Activated CD8-positive, alpha-beta T cell treated with anti-CD3 and anti-CD28 coated beads for 36 hours (primary cell): ENCODE measurements at regions of chr15 and their contacts with region 1.

Region 1: GRCh38 chr15:63466378-63467192 is 37.8 kb upstream of the USP3 start:
- DNase-seq: peak; percentile 68
- ATAC-seq: peak; percentile 85
- H3K4me3 Mint-ChIP-seq: no peak overlapping the region
- H3K27ac Mint-ChIP-seq: no peak overlapping the region
- H3K4me1 Mint-ChIP-seq: peaks cover 26% of the 10 kb centered on the region
- H3K27me3 Mint-ChIP-seq: no peaks in the 10 kb centered on the region
- CTCF ChIP-seq: peak; percentile 86

Region 2: GRCh38 chr15:63447017-63447676 is 19.4 kb before region 1 on chr15:
- CTCF ChIA-PET with region 1: interaction called, 13 read pairs
- POLR2A ChIA-PET with region 1: interaction called, 3 read pairs
- intact Hi-C with region 1: no loop called
- DNase-seq: no peak
- ATAC-seq: no peak
- H3K4me3 Mint-ChIP-seq: no peak overlapping the region
- H3K27ac Mint-ChIP-seq: no peak overlapping the region
- H3K4me1 Mint-ChIP-seq: peaks cover 21% of the 10 kb centered on the region
- H3K27me3 Mint-ChIP-seq: no peaks in the 10 kb centered on the region
- CTCF ChIP-seq: no peak

Region 3: DNA sequence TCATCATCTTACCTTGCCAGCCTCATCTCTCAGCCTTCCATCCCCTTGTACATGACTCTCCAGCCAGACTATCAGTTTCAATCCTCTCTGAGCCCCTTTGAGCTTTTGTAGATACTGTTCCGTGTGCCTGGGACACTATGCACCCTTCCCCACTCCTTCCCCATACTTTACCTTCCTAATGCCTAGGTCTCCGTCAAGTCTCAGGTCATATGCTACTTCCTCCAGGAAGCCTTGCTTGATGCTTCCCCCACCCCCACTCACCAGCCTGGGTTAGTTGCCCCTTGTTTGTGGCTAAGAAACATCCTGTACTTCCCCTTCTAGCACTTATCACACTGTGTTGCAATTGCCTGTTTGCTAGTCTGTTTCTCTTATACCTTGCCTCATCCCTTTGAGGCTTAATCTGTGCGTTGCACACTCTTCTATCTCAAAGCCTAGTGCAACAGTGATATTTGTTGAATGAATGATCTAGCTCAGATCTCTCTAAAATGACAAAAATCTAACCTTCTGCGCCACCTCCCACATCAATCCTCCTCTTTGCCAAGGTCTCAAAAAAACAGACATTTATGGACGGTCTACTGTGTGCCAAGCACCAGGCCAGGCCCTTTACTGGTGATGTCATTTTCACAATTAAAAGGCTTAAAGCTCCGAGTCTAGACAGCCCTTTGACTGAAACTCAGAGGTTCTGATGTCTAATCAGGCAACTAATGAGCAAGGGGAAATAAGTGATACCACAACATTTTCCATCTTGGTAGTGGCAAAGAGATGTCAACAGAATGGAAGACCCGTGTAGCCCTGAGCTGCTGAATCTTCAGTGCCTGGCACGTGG is 31.3 kb after region 1 on chr15:
- CTCF ChIA-PET with region 1: interaction called, 18 read pairs
- POLR2A ChIA-PET with region 1: interaction called, 17 read pairs
- intact Hi-C with region 1: loop called (anchors 5 kb)
- DNase-seq: peak; percentile 82
- ATAC-seq: peak; percentile 60
- H3K4me3 Mint-ChIP-seq: no peak overlapping the region
- H3K27ac Mint-ChIP-seq: no peak overlapping the region
- H3K4me1 Mint-ChIP-seq: peaks cover 75% of the 10 kb centered on the region
- H3K27me3 Mint-ChIP-seq: no peaks in the 10 kb centered on the region
- CTCF ChIP-seq: no peak

Region 4: GRCh38 chr15:63522225-63522578 is 55.6 kb after region 1 on chr15:
- CTCF ChIA-PET with region 1: interaction called, 12 read pairs
- POLR2A ChIA-PET with region 1: no interaction called
- intact Hi-C with region 1: no loop called
- DNase-seq: no peak
- ATAC-seq: no peak
- H3K4me3 Mint-ChIP-seq: no peak overlapping the region
- H3K27ac Mint-ChIP-seq: no peak overlapping the region
- H3K4me1 Mint-ChIP-seq: peaks cover 88% of the 10 kb centered on the region
- H3K27me3 Mint-ChIP-seq: no peaks in the 10 kb centered on the region
- CTCF ChIP-seq: no peak

Region 5: DNA sequence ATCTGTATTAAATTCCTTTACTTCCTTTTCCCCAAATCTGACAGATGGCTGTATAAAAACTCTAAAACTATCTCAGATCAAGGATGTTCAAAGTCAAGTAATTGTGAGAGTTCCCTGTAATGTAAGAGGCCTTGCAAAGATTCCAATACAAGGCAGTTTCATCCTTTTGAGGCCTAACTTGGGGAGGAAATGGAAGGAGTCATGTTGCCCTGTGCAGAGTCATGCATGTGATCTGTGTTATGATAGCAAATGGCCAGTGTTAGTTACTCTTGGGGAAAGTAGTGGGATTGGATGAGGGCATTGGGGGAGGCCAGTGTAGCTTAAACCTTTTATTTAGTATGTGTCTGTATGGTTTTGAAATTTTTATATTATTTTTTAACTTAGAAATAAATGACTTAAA is 106.9 kb after region 1 on chr15:
- CTCF ChIA-PET with region 1: interaction called, 10 read pairs
- POLR2A ChIA-PET with region 1: no interaction called
- intact Hi-C with region 1: no loop called
- DNase-seq: no peak
- ATAC-seq: no peak
- H3K4me3 Mint-ChIP-seq: no peak overlapping the region
- H3K27ac Mint-ChIP-seq: peak overlapping the region; percentile 60
- H3K4me1 Mint-ChIP-seq: peaks cover 7% of the 10 kb centered on the region
- H3K27me3 Mint-ChIP-seq: no peaks in the 10 kb centered on the region
- CTCF ChIP-seq: no peak

Region 6: DNA sequence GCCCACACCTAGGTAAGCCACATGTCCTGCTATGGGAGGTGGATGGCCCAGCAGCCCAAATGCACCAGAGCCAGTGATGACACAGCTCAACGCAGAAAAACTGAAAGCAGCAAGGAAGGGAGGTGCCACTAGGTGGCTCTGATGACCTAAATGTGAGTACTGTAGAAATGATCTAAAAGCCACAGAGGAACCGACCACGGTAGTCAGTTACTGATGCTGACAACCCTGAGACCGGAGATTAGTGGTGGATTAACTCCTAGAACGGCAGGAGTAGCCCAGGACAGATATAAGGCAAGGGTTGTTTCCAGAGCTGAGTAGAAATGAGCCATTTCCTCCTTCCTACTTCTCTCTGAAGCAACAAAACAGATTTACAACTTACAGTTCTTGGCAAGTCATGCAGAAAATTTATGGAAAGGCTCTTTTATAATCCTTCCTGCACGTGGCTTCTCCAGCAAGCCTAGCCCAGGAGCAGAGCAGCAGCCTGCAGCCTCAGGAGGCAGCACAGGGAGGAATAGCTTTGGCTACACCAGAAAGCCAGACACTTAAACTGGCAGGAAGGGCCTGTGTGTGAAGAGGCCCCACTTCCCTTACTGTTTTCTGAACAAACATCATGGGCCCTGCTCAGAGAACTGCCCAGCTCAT is 143.7 kb after region 1 on chr15:
- CTCF ChIA-PET with region 1: interaction called, 13 read pairs
- POLR2A ChIA-PET with region 1: no interaction called
- intact Hi-C with region 1: no loop called
- DNase-seq: peak; percentile 93
- ATAC-seq: peak; percentile 87
- H3K4me3 Mint-ChIP-seq: no peak overlapping the region
- H3K27ac Mint-ChIP-seq: peak overlapping the region; percentile 91
- H3K4me1 Mint-ChIP-seq: peaks cover 32% of the 10 kb centered on the region
- H3K27me3 Mint-ChIP-seq: no peaks in the 10 kb centered on the region
- CTCF ChIP-seq: peak; percentile 81